ENCODE measurements at regions of chr13 and their contacts with region 1.

Region 1: GRCh38 chr13:27362064-27362883 is 62.1 kb upstream of the GTF3A start:
- DNase-seq: peak; percentile 93

Region 2: GRCh38 chr13:26946684-26947343 is 415.5 kb before region 1 on chr13:
- intact Hi-C with region 1: loop called (anchors 2 kb)
- DNase-seq: no peak

Region 3: DNA sequence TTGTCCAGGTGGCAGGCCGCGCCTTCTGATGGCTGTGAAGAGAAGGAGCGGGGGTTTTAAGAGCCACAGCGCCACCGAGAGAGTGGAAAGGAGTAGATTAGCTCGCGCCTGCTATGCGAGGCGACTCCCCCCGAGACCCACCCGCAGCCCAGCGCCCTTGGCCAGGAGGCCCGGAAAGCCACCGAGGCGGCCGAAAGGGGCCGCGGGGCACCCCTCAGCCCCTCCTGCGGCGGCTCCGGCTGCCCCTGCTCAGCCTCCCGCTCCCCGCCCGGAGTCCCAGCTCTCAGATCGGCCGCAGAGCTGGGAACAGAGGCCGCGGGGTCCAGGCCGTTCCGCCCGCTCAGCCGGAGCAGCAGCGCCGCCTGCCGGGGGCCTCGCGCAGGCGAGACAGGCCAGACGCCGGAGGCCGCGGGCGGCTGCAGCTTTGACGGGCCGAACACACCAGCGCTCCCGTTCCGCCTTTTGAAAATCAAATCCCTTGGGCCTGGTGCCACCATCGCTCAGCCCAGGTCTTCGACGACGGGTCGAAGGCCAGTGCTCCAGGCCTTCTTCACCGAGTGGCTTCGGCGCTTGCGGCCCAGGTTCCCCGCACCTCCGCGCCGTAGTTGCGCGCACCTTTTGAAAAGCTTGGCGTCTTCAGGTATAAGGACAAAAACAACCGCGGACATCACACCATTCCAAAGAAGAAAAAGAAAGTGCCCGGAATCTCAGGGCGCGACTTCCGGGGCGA is 591.6 kb after region 1 on chr13:
- intact Hi-C with region 1: loop called (anchors 10 kb)
- DNase-seq: no peak

Region 4: GRCh38 chr13:27980280-27980998 is 618.2 kb after region 1 on chr13:
- intact Hi-C with region 1: loop called (anchors 5 kb)
- DNase-seq: peak; percentile 47

Measured in cardiac septum (tissue), 1 donor.